ENCODE measurements at regions of chr14 and their contacts with region 1.

Region 1: DNA sequence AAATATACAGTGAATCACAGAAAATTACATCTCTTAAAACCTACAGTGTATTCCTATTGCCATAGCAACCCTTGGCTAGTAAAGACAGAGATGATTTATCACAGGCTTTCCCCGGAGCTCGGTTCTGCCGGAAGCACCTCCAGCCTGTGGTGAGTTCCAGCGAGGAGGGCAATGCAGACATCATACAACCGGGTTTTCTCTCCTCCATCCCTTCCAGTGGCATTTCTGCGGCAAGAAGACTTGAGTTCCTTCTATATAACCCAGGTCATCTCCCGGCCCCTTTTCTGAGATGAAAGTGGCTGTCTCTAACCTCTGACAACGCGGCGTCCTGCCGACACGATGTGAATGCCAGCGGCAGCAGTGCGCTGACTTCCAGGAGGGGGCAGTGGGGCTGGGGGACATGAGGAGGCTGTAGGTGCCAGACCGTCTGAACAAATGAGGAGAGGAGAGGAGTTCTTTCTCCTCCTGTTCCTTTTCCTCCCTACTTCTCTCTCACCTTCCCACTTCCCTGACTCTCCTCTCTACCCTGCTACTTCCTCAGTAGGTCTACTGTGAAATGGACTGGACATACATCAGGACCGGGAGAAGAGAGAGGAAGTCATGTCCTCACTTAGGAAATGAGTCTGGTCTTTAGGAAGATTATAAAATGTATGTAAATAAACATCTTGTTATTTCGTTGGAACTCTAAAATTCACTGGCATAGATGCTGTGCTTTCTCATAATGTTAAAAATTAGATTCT is 68.6 kb upstream of the MAX start:
- DNase-seq: peak; percentile 40
- ATAC-seq: peak; percentile 55
- H3K4me3 ChIP-seq: peak overlapping the region; percentile 57
- H3K27ac ChIP-seq: peak overlapping the region; percentile 59
- H3K4me1 ChIP-seq: peaks cover 26% of the 10 kb centered on the region
- H3K27me3 ChIP-seq: no peaks in the 10 kb centered on the region
- CTCF ChIP-seq: peak in 2 of 3 experiments; percentile 25 to 43; a peak in 3 of 6 replicates
- EP300 ChIP-seq: no peak
- POLR2A ChIP-seq: 0 out of 2 replicates have a peak, but pooled peaks have one; percentile 44
- RAD21 ChIP-seq: peak; percentile 46

Region 2: GRCh38 chr14:65206448-65207096 is 35.6 kb after region 1 on chr14:
- CTCF ChIA-PET with region 1: interaction called, 13 read pairs
- POLR2A ChIA-PET with region 1: interaction called, 7 read pairs
- RAD21 ChIA-PET with region 1: interaction called, 7 read pairs
- SMC1A ChIA-PET with region 1: interaction called, 20 read pairs
- in situ Hi-C with region 1: no loop called
- intact Hi-C with region 1: loop called (anchors 1 kb)
- DNase-seq: peak; percentile 88
- ATAC-seq: peak; percentile 83
- H3K4me3 ChIP-seq: peak overlapping the region; percentile 56
- H3K27ac ChIP-seq: peak overlapping the region; percentile 96
- H3K4me1 ChIP-seq: peaks cover 63% of the 10 kb centered on the region
- H3K27me3 ChIP-seq: no peaks in the 10 kb centered on the region
- CTCF ChIP-seq: no peak
- EP300 ChIP-seq: peak; percentile 56 to 70; a peak in 3 of 4 replicates
- POLR2A ChIP-seq: peak; percentile 33; the same call in 1 of the 2 replicates
- RAD21 ChIP-seq: no peak

Region 3: DNA sequence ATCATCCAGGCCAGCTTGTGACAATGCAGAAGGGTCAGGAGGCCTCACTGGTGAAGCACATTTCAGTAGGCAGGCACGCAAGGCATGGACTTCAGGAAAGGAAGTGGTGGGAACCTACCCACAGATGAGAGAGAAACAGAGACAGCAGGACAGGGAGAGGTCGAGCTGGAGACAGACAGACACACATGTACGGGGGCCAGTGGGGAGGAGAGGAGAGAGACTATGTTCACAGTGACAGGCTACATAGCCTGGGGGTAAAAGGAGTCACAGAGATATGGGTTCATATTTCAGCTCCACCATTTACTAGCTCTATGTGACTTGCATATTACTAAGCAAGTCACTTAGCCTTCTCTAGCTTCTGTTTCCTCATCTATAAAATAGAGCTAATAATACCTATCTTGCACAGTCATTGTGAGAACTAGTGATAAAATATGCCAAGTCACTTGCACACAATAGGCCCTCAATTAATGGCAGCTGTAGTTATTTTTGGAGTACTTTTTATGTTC is 150.5 kb after region 1 on chr14:
- CTCF ChIA-PET with region 1: no interaction called
- POLR2A ChIA-PET with region 1: no interaction called
- RAD21 ChIA-PET with region 1: no interaction called
- SMC1A ChIA-PET with region 1: interaction called, 11 read pairs
- in situ Hi-C with region 1: no loop called
- intact Hi-C with region 1: loop called (anchors 2 kb)
- DNase-seq: peak; percentile 82
- ATAC-seq: peak; percentile 51
- H3K4me3 ChIP-seq: no peak overlapping the region
- H3K27ac ChIP-seq: peak overlapping the region; percentile 94
- H3K4me1 ChIP-seq: peaks cover 47% of the 10 kb centered on the region
- H3K27me3 ChIP-seq: no peaks in the 10 kb centered on the region
- CTCF ChIP-seq: no peak
- EP300 ChIP-seq: peak in 1 of 2 experiments; percentile 35; a peak in 1 of 4 replicates
- POLR2A ChIP-seq: peak; percentile 37; the same call in 1 of the 2 replicates
- RAD21 ChIP-seq: peak; percentile 11; the same call in 1 of the 2 replicates

Region 4: GRCh38 chr14:65604936-65605335 is 434.0 kb after region 1 on chr14:
- CTCF ChIA-PET with region 1: no interaction called
- POLR2A ChIA-PET with region 1: no interaction called
- RAD21 ChIA-PET with region 1: no interaction called
- SMC1A ChIA-PET with region 1: no interaction called
- in situ Hi-C with region 1: no loop called
- intact Hi-C with region 1: loop called (anchors 5 kb)
- DNase-seq: no peak
- ATAC-seq: no peak
- H3K4me3 ChIP-seq: no peak overlapping the region
- H3K27ac ChIP-seq: no peak overlapping the region
- H3K4me1 ChIP-seq: no peaks in the 10 kb centered on the region
- H3K27me3 ChIP-seq: no peaks in the 10 kb centered on the region
- CTCF ChIP-seq: peak in 2 of 3 experiments; percentile 21 to 56; a peak in 2 of 6 replicates
- EP300 ChIP-seq: no peak
- POLR2A ChIP-seq: no peak
- RAD21 ChIP-seq: no peak

Region 5: DNA sequence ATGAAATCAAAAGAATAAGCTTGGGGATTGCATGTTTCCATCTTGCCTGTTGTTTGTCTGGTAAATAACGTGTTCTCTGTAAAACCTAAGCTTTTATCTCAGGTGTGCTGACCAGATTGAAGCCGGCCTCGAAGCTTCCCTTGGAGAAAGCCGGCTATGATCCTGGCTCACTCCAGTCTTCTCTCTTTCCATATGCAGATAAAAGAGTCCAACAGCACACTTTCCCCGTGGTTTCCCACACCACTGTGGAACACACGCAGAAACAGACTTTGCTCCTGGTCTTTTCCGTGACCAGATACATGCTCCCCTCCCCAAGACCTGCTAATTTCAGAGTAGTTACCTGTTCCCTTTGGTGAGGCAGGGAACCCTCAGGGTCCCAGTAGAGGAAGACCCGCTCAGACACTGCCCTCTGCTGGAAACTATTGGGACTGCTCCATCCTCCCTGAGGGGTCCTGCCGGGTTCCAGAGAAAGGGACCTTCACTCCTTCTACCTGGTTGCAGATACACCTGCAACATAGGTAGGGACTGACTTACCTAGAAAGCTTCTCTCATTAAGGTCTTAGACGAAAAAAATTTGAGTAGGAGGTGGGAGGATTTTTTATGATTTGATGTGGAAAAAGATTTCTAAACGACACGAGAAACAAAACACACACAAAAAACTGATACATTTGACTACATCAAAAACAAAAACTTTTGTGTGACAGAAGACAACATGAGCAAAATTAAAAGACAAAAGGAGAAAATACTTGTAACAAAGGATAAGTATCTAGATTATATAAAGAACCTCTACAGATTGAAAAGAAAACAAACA is 899.8 kb after region 1 on chr14:
- CTCF ChIA-PET with region 1: interaction called, 27 read pairs
- POLR2A ChIA-PET with region 1: no interaction called
- RAD21 ChIA-PET with region 1: interaction called, 4 read pairs
- SMC1A ChIA-PET with region 1: interaction called, 4 read pairs
- in situ Hi-C with region 1: loop called (anchors 5 kb)
- intact Hi-C with region 1: no loop called
- DNase-seq: no peak
- ATAC-seq: peak; percentile 85
- H3K4me3 ChIP-seq: no peak overlapping the region
- H3K27ac ChIP-seq: no peak overlapping the region
- H3K4me1 ChIP-seq: no peaks in the 10 kb centered on the region
- H3K27me3 ChIP-seq: no peaks in the 10 kb centered on the region; a peak in 1 of 4 replicates
- CTCF ChIP-seq: peak; percentile 72 to 87 (median 82)
- EP300 ChIP-seq: no peak
- POLR2A ChIP-seq: no peak
- RAD21 ChIP-seq: peak; percentile 84

Measured in GM12878 (cell line).